ENCODE measurements at regions of chr15 and their contacts with region 1.

Region 1: GRCh38 chr15:57732526-57733331 is 26.2 kb downstream of the POLR2M start:
- DNase-seq: peak; percentile 71
- H3K4me3 Mint-ChIP-seq: no peak overlapping the region
- H3K27ac Mint-ChIP-seq: no peak overlapping the region
- H3K4me1 Mint-ChIP-seq: peaks cover 6% of the 10 kb centered on the region
- H3K27me3 Mint-ChIP-seq: no peaks in the 10 kb centered on the region
- CTCF ChIP-seq: peak; percentile 80

Region 2: GRCh38 chr15:56639628-56640027 is 1093.1 kb before region 1 on chr15:
- CTCF ChIA-PET with region 1: no interaction called
- POLR2A ChIA-PET with region 1: no interaction called
- intact Hi-C with region 1: no loop called
- DNase-seq: no peak
- H3K4me3 Mint-ChIP-seq: no peak overlapping the region
- H3K27ac Mint-ChIP-seq: no peak overlapping the region
- H3K4me1 Mint-ChIP-seq: peaks cover 7% of the 10 kb centered on the region
- H3K27me3 Mint-ChIP-seq: no peaks in the 10 kb centered on the region
- CTCF ChIP-seq: no peak

Region 3: DNA sequence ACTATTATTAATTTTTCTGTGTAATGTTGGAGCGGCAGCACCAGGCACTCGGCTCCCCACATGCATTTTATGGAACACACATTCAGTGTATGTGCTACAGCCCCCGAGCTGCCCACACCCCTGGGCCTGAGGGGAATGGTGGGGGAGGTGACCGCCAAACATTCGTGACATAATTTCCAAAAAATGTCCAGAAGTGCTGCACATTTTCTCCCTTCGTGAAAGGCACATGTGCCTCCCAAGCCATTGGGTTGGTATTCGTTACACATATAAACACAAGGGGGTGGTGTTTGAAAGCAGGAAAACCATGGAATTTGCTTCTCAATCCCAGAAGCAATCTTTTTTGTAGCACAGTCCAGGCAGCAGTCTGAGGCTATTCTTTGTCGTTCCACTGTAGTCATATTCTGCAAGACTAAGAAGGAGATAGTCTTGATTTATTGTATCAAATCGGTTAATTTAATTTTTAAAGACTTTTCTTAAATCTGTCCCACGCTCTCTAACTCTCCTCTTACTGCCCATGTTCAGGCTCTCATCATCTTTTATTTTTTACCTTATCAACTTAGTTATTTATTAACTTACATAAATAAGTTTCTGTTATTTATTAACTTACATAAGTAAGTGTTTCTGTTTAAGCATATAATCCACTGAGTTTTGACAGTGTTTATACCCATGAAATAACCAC is 65.4 kb before region 1 on chr15:
- CTCF ChIA-PET with region 1: interaction called, 4 read pairs
- POLR2A ChIA-PET with region 1: no interaction called
- intact Hi-C with region 1: loop called (anchors 1 kb)
- DNase-seq: peak; percentile 73
- H3K4me3 Mint-ChIP-seq: peak overlapping the region; percentile 43
- H3K27ac Mint-ChIP-seq: no peak overlapping the region
- H3K4me1 Mint-ChIP-seq: peaks cover 19% of the 10 kb centered on the region
- H3K27me3 Mint-ChIP-seq: no peaks in the 10 kb centered on the region
- CTCF ChIP-seq: peak; percentile 50

Region 4: GRCh38 chr15:57720867-57721266 is 11.9 kb before region 1 on chr15:
- CTCF ChIA-PET with region 1: interaction called, 15 read pairs
- POLR2A ChIA-PET with region 1: interaction called, 4 read pairs
- intact Hi-C with region 1: no loop called
- DNase-seq: no peak
- H3K4me3 Mint-ChIP-seq: no peak overlapping the region
- H3K27ac Mint-ChIP-seq: no peak overlapping the region
- H3K4me1 Mint-ChIP-seq: no peaks in the 10 kb centered on the region
- H3K27me3 Mint-ChIP-seq: no peaks in the 10 kb centered on the region
- CTCF ChIP-seq: no peak

Region 5: GRCh38 chr15:57743424-57743823 is 10.7 kb after region 1 on chr15:
- CTCF ChIA-PET with region 1: interaction called, 36 read pairs
- POLR2A ChIA-PET with region 1: interaction called, 5 read pairs
- intact Hi-C with region 1: no loop called
- DNase-seq: peak; percentile 14
- H3K4me3 Mint-ChIP-seq: no peak overlapping the region
- H3K27ac Mint-ChIP-seq: no peak overlapping the region
- H3K4me1 Mint-ChIP-seq: no peaks in the 10 kb centered on the region
- H3K27me3 Mint-ChIP-seq: no peaks in the 10 kb centered on the region
- CTCF ChIP-seq: no peak

Measured in MCF 10A (cell line).